Psoas muscle (tissue), 8 donors: ENCODE measurements at regions of chr19 and their contacts with region 1.

Region 1: DNA sequence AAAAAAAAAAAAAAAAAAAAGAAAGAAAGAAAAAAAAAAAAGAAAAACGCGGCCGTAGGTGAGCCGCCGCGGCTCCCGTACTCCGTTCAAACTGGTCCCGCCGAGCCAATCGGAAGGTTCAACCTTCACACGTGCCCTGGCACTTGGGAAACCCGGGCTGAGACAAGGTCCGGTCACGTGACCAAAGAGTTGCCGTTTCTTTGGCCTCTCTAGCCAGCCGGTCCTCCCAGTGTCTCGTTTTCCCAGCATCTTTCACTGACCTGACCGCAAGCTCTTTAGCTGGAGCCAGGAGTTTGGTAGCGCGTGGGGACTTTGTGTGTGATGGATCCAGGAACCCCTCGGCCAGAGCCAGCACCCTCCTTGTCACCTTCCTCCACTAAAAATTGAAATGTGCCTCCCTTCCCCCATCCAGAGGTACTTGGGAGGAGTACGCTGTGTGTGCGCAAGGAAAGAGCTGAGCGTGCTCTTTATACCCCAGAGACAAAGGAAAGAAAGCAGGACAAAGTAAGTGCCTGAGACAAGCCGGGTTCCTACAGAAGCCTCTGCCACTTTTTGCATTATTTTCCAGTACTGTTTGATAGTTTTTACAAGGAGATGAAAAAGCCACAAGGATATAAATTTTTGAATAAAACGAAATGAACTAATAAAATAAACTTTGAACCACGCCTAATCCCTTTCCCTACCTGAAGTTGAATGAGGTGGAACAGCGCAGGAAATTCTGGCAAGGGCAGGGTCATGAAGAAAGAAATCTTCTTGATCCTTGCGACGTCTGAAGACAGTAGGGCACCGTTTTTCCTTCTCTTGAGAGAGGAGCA is 959 bp downstream of the TNPO2 start:
- DNase-seq: peak; percentile 97 to 98
- ATAC-seq: peak; percentile 93 to 94 (median 93)
- H3K4me3 ChIP-seq: peak overlapping the region; percentile 87
- H3K27ac ChIP-seq: peak overlapping the region; percentile 92
- H3K4me1 ChIP-seq: peaks cover 27% of the 10 kb centered on the region
- H3K27me3 ChIP-seq: no peaks in the 10 kb centered on the region
- CTCF ChIP-seq: no peak

Region 2: GRCh38 chr19:12666265-12667048 is 56.3 kb before region 1 on chr19 and contains the starts of genes MAN2B1 and WDR83:
- intact Hi-C with region 1: no loop called
- DNase-seq: peak; percentile 79 to 85
- ATAC-seq: peak; percentile 73 to 84 (median 82)
- H3K4me3 ChIP-seq: peak within 1 kb of the TSS; percentile 98
- H3K27ac ChIP-seq: peak within 1 kb of the TSS; percentile 74
- H3K4me1 ChIP-seq: peaks cover 33% of the 10 kb centered on the region
- H3K27me3 ChIP-seq: no peaks in the 10 kb centered on the region
- CTCF ChIP-seq: no peak
- total RNA-seq, gene MAN2B1: 14.6 to 20.5 (median 16.2) TPM
- total RNA-seq, gene WDR83: 1.8 to 5.8 (median 3.7) TPM

Region 3: DNA sequence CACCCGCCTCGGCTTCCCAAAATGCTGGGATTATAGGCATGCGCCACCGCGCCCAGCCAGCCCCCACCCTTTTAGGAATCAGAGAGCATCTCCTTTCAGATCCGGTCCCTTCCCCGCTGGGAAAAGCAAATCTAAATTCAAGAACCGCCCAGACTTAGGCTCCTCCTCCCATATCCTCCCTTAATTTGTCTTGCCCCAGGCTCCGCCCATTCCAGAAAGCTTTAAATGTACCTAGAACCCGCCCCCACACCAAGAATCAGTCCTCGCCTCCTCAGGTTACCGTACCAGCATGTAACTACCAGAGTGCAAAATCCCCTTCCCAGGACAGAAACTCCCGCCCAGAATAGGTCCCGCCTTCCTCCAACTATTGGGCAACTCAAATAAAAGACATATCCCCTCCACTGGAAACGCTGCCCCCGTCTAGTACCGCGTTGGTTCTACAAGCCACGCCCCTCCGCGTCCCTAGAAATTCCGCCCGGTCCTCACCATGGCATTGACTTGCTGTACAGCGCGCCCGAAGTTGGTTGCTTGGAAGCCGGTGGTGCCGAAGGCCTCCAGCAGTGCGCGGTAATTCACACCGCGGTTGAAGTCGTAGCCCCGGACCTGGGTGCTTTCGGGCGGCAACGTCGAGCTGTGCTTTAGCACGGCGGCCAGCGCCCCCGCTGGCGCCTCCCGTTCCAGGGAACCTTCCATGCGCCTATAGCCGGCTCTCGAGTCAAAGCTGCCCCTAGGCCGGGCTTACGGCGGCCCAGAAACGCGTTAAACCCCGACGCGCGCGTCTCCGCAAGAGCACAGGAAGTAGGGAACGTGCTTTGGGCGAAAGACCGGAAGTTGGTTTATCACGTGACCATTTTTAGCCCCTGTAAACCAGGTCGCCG is 41.5 kb before region 1 on chr19 and contains the start of gene DHPS:
- intact Hi-C with region 1: loop called in 1 of 2 experiments (anchors 5 kb)
- DNase-seq: peak; percentile 90 to 91
- ATAC-seq: peak; percentile 91 to 94 (median 91)
- H3K4me3 ChIP-seq: peak within 1 kb of the TSS; percentile 76
- H3K27ac ChIP-seq: peak within 1 kb of the TSS; percentile 96
- H3K4me1 ChIP-seq: peaks cover 3% of the 10 kb centered on the region
- H3K27me3 ChIP-seq: no peaks in the 10 kb centered on the region
- CTCF ChIP-seq: no peak
- total RNA-seq, gene DHPS: 75.6 to 86.7 (median 82.9) TPM

Region 4: DNA sequence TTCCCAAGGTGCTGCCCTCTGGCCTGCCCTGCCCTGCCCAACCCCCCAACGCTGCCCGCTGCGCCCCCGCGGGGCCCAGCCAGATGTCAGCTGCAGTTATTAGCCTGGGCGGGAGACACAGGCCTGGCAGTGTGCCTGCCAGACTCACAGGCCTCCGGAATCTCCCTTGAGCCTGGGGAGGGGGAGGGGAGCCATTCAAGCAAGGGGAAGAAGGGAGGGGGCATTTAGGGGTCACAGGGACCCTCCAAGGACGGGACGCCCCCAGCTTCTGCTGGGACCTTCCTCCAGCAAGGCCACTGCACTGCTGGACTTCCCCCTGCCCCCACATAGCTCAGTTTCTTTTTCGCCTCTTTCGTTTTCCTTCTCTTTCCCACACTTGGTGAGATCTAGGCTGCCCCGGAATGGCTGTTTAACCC is 65.9 kb after region 1 on chr19:
- intact Hi-C with region 1: no loop called
- DNase-seq: peak; percentile 85 to 90
- ATAC-seq: peak in 2 of 4 donors; percentile 3 to 16
- H3K4me3 ChIP-seq: peak overlapping the region; percentile 99
- H3K27ac ChIP-seq: peak overlapping the region; percentile 99
- H3K4me1 ChIP-seq: peaks cover 27% of the 10 kb centered on the region
- H3K27me3 ChIP-seq: no peaks in the 10 kb centered on the region
- CTCF ChIP-seq: no peak

Region 5: DNA sequence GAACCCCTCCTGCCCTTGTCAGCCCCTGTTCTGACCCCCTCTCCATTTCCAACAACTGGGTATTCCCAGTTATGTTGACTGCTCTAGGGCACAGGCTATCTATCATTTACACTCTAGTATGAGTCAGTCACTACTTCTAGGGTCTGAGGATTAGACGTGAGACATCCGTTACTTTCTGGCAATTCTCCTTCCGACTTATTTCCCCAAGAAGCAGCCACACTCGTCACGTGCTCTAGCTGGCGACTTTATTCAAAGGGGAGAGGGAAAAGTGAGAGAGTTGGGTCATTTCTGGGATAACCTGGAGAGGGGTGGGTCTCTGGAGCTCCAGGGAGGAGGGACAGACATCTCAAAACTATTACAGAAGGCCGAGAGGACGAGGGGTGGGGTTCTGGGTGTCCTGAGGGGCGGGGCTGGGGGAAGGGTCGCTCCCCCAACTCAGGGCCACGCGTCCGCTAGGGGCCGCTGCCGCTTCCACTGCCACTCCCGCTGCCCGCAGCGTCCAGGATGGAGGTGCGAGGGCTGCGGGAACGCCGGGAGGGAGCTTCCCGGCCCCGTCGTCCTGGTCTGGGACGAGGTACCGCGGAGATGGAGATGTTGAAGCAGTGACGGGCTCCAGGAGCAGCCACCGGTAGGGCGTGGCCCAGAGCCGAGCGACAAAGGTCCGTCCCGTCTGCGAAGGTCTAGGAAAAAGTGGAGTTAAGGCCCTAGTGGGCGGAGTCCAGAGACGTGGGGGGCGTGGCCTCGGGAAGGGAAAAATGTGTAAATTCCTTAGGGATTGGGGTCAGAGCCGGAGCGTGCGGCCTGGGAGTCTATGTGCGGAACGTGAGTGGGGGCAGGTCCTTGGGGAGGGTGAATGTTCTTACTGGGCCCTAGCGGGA is 102.7 kb after region 1 on chr19:
- intact Hi-C with region 1: no loop called
- DNase-seq: no peak
- ATAC-seq: no peak
- H3K4me3 ChIP-seq: no peak overlapping the region
- H3K27ac ChIP-seq: no peak overlapping the region
- H3K4me1 ChIP-seq: no peaks in the 10 kb centered on the region
- H3K27me3 ChIP-seq: peaks cover 0 to 62% (median 10%) of the 10 kb centered on the region in 3 donors
- CTCF ChIP-seq: peak; percentile 18